Head of caudate nucleus (tissue), 42 donors: ENCODE measurements at regions of chr1 and their contacts with region 1.

Region 1: GRCh38 chr1:112619520-112620376 is at the start of gene CAPZA1:
- DNase-seq: peak; percentile 84 to 97 (median 92)

Region 2: DNA sequence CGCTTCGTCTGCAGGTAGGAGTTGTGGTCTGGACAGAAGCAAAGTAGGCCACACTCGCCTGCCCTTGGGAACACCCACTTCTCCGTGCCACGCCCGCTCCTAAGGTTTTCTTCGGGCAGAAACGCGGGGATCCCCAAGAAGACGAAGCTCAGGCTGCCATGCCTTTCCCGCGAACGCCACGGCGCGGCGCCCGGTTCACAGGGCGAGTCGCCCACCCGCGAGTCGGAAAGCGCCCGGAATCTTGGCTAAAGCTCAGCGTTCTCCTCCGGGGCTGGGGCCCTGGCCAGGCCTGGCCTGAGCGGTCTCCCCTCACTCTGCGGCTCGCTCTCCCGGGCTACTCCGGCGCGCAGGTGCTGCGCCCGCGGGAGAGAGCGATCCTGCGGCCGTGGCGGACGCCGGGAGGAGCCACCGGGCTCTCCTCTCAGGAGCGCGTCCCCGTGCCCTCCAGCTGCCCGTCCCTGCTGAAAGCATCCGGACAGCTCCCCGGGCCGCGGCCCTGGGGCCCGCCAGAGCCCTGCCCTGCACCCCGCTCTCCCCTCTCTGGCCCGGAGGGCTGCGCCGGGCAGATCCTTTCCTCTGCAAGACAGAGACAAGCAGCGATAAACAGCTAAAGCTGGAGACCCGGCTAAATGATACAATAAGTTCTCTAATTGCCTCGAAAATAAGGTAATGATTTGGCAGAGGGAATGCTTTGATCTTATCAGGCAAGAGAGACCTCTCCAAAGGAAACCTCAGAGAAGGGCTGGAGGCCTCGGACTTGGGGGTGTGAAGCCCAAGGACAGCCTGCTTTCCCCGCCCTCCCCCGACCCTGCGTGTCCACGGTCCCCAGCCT is 117.7 kb before region 1 on chr1:
- intact Hi-C with region 1: loop called (anchors 10 kb)
- DNase-seq: peak; percentile 57 to 94 (median 85)

Region 3: GRCh38 chr1:112674439-112674985 is 54.8 kb after region 1 on chr1 and contains the start of gene MOV10:
- intact Hi-C with region 1: loop called (anchors 5 kb)
- DNase-seq: peak in 40 of 42 donors; percentile 17 to 82 (median 58)

Region 4: DNA sequence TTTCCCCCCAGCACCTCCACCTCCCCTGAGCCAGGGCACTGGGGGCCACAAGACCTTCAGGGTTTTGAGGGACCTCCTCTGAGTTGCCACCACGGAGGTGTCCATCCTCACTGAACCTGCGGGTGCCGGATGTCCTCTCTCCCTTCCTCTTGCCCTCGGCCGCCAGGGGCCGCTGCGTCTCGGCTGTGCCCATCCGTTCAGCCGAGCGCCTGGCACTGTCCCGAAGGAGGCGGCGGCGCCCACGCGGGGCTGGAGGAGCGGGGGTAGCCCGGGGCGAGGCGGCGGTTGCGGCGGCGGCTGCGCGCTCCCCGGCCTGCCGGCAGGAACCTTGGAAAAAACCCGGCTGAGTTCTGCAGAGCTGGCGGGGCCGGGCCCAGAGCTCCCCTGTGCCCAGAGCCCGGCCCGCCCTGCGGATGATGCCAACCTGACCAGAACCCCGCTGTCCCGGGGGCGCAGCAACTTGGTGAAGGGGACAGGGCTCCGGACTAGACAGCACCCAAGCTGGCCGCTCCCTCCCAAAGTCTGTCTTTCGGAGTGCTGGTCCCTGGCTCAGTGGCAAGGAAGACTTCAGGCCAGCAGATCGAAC is 99.0 kb after region 1 on chr1:
- intact Hi-C with region 1: no loop called
- DNase-seq: peak; percentile 48 to 93 (median 86)

Region 5: DNA sequence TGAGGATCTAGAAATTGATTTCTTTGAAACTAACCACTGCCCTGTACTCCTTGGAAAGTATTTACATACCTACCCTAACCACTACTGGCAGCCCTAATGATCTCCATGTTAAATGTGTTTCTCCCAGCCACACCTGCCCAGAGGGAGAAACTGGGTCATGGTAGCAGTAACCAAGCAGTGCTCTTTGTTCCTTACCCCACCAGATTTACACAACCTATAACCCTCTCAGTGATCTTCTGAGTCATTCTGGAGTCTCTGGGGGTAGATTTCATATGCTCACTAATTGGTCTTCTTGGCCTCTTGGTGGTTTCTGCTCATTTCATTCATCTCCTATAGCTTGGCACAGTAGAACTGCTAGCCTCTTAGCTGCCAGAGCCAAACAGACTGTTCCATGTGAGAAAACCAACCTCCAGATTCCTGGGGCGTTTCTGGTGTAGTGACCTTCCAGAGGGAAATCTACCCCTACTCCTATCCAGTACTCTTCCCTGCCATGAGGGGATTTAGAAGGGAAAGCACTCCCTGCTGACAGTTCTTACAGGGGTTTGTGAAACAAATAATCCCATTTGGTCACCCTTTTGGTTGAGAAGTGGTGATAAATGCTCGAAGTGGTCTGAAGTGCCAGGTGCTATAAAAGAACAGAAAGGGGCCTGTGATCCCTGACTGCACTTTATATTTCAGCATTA is 417.0 kb after region 1 on chr1:
- intact Hi-C with region 1: no loop called
- DNase-seq: no peak